ENCODE measurements at regions of chr9 and their contacts with region 1.

Region 1: DNA sequence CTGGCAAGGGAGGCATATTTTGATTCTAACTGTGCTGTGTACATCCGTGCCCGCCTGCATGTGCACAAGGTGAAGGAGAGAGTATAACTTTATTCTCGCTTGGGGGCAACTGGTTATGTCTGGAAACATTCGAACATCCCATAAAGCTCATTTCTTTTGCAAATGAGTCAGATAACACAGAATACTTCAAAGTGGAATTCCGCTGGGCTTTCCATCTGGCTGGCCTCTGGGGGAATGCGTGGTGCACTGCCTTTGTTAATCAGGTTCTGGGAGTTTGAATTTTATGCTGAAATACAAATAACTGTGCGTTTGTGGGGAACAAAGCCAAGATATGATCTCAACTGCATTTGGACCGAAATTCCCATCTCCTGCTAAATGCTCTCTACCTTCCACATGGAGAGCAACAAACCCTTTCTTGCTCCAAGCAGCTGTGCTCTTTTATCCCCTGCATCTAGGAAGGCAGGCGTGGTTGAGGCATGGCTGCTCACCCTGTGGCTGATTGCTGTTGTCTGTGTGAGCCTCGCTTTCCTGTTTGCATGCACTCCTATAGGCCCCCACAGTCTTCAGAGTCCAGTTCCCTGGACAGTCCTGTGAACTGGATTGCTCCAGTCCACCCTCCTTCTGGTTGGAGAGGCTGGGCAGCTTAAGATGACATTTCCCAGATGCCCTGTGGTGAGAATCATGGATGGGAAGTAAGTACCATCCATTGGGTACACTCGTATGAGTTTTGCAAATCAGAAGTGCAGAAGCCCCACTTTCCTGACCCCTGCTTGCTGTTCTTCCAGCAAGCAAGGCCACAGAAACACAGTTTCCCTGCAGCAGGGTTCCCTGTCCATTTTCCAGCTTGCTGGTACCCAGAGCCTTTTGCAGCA is 82.9 kb upstream of the ALDH1B1 start:
- DNase-seq: no peak

Region 2: GRCh38 chr9:38017149-38017884 is 292.2 kb before region 1 on chr9:
- intact Hi-C with region 1: loop called in 1 of 2 experiments (anchors 10 kb)
- DNase-seq: no peak

Region 3: DNA sequence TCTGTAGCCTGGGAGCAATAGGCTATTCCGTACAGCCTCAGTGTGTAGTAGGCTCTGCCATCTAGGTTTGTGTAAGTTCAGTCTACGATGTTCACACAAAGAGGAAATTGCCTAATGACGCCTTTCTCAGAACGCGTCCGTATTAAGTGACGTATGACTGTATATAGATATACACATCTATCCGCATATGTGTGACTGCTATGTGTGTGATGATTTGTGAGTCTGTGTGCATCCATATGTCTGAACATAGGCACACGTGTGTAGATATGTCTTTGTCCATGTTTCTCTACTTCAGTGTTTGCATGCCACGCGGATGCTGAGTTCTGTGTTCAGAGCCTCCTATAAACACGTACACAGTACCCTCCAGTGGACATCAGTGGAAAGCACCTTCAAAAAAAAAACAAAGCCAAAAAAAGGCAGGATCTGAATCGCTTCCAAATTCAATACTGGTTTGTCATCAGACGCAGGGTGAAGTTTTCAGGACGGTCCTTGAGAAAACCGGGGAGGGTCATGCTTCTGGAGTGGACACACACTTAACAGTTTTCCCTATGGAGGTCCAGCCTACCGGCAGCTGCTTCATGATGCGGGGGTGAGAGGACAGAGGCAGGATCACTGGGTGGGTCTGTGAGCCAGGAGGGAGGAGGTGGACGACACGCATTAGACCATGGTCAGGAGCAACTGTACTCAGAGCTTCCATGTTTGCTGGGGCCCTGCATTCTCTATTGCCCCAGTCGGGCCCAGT is 53.5 kb after region 1 on chr9:
- intact Hi-C with region 1: no loop called
- DNase-seq: no peak